Cardiac septum (tissue), 1 donor: ENCODE measurements at regions of chr2 and their contacts with region 1.

Region 1: GRCh38 chr2:60550178-60550983 is 3.1 kb downstream of the BCL11A start:
- DNase-seq: no peak

Region 2: GRCh38 chr2:59301466-59302402 is 1248.6 kb before region 1 on chr2:
- intact Hi-C with region 1: loop called (anchors 5 kb)
- DNase-seq: no peak

Region 3: DNA sequence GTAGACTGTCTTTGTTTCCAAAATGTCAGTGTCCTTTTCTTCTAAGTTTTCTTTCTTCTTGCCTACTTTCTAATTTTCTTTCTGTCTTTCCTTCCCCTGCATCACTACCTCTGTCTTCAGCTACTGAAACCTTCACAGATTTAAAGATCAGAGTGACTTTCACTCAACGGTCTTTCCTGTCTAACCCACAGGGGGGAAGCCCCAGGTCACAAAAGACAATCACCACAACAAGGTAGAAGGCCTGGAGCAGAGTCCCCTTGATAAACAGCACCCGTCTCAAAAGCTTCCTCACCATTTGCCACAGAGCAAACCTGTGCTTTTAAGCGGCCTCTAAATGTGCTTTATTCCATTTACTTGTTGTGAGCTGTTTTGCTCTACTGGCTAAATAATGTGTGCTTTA is 662.4 kb before region 1 on chr2:
- intact Hi-C with region 1: loop called (anchors 10 kb)
- DNase-seq: no peak

Region 4: GRCh38 chr2:60053791-60054190 is 496.6 kb before region 1 on chr2:
- intact Hi-C with region 1: loop called (anchors 5 kb)
- DNase-seq: no peak

Region 5: GRCh38 chr2:60337140-60337494 is 213.3 kb before region 1 on chr2:
- intact Hi-C with region 1: loop called (anchors 2 kb)
- DNase-seq: no peak

Region 6: GRCh38 chr2:60439219-60439974 is 111.0 kb before region 1 on chr2:
- intact Hi-C with region 1: loop called (anchors 5 kb)
- DNase-seq: peak; percentile 77

Region 7: DNA sequence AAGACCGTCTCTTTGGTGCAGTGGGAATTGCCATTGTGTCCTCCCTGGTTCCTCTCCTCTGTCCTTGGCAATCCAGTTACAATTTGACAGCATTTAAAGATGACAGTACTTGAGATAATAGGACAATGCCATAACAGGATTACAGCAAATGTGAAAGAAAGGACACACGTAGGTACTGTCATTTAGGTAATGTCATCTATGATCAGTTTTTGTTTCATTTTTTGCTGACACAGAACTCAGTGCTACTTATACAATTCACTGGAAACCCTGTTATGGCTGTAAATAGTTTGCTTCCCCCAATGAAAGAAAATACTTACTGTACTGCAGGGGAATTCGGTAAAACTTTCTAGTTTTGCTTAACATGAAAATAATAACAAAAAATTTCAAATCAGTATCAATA is 62.1 kb before region 1 on chr2:
- intact Hi-C with region 1: loop called (anchors 5 kb)
- DNase-seq: no peak